CD14-positive monocyte (primary cell): ENCODE measurements at regions of chr17 and their contacts with region 1.

Region 1: DNA sequence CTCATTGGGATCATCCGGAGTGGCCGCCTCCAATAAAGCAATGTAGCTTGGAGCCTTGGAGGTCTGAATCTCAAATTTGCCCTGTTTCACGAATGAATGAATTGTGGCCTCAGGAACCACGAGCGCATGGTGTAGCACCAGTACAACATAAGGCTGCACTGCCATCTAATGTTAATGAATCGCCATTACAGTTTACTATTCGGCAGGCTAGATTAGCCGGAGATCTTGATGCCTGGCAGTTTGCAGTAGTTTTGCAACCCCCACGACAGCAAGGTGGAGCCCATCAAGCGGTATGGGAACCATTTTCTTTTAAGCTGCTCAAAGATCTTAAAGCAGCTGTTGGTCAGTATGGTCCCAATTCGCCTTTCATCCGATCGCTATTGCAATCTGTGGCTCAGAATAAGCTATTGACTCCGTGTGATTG is 18.8 kb downstream of the ALOX15B start:
- DNase-seq: peak; percentile 60 to 88 (median 76)
- H3K4me3 ChIP-seq: no peak overlapping the region
- H3K4me3 Mint-ChIP-seq: no peak overlapping the region
- H3K27ac ChIP-seq: no peak overlapping the region
- H3K27ac Mint-ChIP-seq: peak overlapping the region in 2 of 7 donors; percentile 49 to 95
- H3K4me1 ChIP-seq: peaks cover 39 to 42% of the 10 kb centered on the region in 2 donors
- H3K4me1 Mint-ChIP-seq: peaks cover 37% of the 10 kb centered on the region
- H3K27me3 ChIP-seq: peaks cover 4 to 6% of the 10 kb centered on the region in 2 donors
- H3K27me3 Mint-ChIP-seq: peaks cover 12 to 21% (median 14%) of the 10 kb centered on the region in 3 donors
- CTCF ChIP-seq: peak; percentile 81

Region 2: DNA sequence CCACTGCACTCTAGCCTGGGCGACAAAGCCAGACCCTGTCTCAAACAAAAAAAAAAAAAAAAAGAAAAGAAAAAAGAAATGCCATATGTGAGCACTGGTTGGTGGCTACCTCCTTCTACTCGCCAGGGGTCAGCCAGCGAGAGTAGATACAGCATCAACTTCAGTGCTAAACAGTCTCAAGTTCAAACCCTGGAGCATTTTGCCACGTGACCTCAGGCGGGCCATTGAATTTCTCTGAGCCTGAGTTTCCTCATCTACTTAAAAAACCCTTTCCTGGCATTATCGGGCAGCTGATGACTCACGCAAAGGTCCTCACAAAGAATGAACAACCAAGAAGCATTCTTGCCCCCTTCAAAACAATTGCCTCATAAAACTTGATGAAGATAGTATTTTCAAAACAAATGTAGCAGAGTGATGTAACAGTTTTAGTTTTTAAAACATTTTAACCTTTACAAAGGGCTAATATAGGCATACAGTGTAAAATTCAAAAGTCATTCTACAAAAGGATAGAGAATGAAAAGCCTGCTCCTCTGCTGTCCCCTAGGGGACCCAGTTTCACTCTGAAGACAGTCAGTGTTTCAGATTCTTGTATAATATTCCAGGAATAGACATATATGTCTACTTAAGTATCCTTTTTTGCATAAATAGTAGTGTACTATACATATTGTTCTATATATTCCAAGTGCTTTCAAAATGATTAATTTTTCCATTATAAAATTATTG is 311.8 kb before region 1 on chr17:
- intact Hi-C with region 1: loop called in 1 of 2 experiments (anchors 10 kb)
- DNase-seq: peak; percentile 30 to 72 (median 46)
- H3K4me3 ChIP-seq: no peak overlapping the region
- H3K4me3 Mint-ChIP-seq: no peak overlapping the region
- H3K27ac ChIP-seq: no peak overlapping the region
- H3K27ac Mint-ChIP-seq: peak overlapping the region in 1 of 7 donors; percentile 42
- H3K4me1 ChIP-seq: peaks cover 0 to 8% of the 10 kb centered on the region in 2 donors
- H3K4me1 Mint-ChIP-seq: peaks cover 11% of the 10 kb centered on the region
- H3K27me3 ChIP-seq: no peaks in the 10 kb centered on the region
- H3K27me3 Mint-ChIP-seq: peaks cover 2 to 4% (median 2%) of the 10 kb centered on the region in 3 donors
- CTCF ChIP-seq: no peak

Region 3: DNA sequence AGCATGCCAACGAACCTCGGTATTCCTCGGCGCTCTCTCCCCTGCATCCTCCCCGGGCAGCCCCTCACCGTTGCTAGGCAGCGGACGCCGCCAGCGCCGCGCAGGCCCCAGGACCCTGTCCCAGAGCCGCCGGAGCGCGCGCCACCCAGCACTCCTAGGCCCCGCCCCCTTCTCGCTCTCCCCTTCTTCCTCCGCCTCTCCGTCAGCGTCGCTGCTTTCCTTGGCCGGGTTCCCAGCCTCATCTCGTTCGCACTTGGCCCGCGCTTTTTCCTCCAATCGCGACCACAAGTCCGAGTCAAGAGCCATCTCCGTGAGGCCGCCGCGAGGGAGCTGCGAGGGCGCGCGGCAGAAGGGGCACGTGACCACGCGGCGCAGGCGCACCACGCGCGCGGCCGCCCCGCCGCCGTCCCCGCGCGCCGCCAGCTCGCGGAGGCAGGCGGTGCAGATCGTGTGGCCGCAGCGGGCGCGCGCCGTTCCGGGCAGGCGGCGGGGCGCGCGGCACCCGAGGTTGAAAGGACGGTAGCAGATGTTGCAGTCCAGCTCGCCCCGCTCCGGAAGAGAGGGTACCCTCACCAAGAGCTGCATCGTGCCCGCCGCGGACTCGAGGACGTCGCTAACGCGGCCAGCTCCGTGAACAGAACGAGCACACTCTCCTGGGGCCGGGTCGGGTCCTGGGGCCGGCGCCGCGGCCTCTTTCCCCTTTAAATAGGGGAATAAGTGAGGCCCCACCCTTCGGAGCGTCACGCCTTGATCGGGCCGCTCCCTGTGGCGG is 141.9 kb before region 1 on chr17 and contains the start of gene RNF227:
- intact Hi-C with region 1: loop called (anchors 2 kb)
- DNase-seq: peak; percentile 71 to 88 (median 79)
- H3K4me3 ChIP-seq: peak within 1 kb of the TSS; percentile 27 to 66 (median 34)
- H3K4me3 Mint-ChIP-seq: peak within 1 kb of the TSS; percentile 86 to 89
- H3K27ac ChIP-seq: peak within 1 kb of the TSS; percentile 81 to 87
- H3K27ac Mint-ChIP-seq: peak within 1 kb of the TSS; percentile 83 to 96 (median 94)
- H3K4me1 ChIP-seq: peaks cover 23 to 32% of the 10 kb centered on the region in 2 donors
- H3K4me1 Mint-ChIP-seq: peaks cover 39% of the 10 kb centered on the region
- H3K27me3 ChIP-seq: no peaks in the 10 kb centered on the region
- H3K27me3 Mint-ChIP-seq: peaks cover 0 to 3% (median 1%) of the 10 kb centered on the region in 3 donors
- CTCF ChIP-seq: no peak
- polyA plus RNA-seq, gene RNF227: 0.59 to 6.7 (median 1.3) TPM

Region 4: GRCh38 chr17:8016632-8017478 is 40.8 kb before region 1 on chr17:
- intact Hi-C with region 1: loop called (anchors 2 kb)
- DNase-seq: peak; percentile 70 to 85 (median 77)
- H3K4me3 ChIP-seq: peak overlapping the region; percentile 36 to 75 (median 39)
- H3K4me3 Mint-ChIP-seq: peak overlapping the region; percentile 81 to 89
- H3K27ac ChIP-seq: peak overlapping the region; percentile 79 to 84
- H3K27ac Mint-ChIP-seq: peak overlapping the region; percentile 89 to 97 (median 93)
- H3K4me1 ChIP-seq: peaks cover 68 to 78% of the 10 kb centered on the region in 2 donors
- H3K4me1 Mint-ChIP-seq: peaks cover 73% of the 10 kb centered on the region
- H3K27me3 ChIP-seq: peaks cover 0 to 6% of the 10 kb centered on the region in 2 donors
- H3K27me3 Mint-ChIP-seq: peaks cover 0 to 9% (median 9%) of the 10 kb centered on the region in 3 donors
- CTCF ChIP-seq: peak; percentile 95

Region 5: DNA sequence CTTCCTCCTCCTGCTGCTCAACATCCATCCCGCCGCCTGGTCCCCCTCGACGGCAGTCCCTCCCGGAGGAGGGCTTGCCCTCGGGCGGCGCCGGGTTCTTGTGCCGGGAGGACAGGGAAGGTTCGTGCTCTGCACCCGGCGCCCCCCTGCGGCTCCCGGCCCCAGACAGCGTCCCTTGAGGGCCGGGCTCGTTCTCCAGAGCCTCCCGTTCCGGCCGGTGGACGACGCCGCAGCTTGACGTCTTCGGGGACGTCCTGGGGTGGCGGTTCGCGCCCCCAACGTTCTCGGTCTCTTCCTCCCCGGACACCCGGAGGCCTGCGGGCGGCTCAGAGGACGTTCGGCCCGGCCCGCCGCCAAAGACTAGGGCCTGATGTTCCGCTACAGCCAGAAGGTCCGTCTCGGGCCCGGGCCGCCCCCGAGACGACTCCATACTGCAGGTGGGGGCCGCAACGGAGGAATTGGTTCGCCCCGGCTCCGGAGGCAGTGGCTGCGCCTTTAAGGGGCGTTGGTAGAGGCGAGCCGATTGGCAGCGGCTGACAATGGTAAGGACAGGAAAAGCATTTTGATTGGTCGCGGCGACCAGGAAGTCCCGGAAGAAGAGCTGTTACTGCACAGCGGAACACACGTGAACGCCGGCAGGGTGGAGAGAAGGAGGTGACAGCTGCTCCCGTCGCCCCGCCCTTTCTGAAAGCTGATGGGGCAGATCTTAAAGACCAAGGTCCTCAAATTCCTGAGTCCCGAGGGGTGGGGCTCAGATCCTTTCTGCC is 132.2 kb after region 1 on chr17 and contains the start of gene BORCS6:
- intact Hi-C with region 1: no loop called
- DNase-seq: peak; percentile 96 to 98 (median 98)
- H3K4me3 ChIP-seq: peak within 1 kb of the TSS; percentile 82 to 90 (median 87)
- H3K4me3 Mint-ChIP-seq: no peak within 1 kb of the TSS
- H3K27ac ChIP-seq: peak within 1 kb of the TSS; percentile 78 to 89
- H3K27ac Mint-ChIP-seq: peak within 1 kb of the TSS in 6 of 7 donors; percentile 88 to 94 (median 92)
- H3K4me1 ChIP-seq: peaks cover 65 to 73% of the 10 kb centered on the region in 2 donors
- H3K4me1 Mint-ChIP-seq: peaks cover 9% of the 10 kb centered on the region
- H3K27me3 ChIP-seq: no peaks in the 10 kb centered on the region
- H3K27me3 Mint-ChIP-seq: peaks cover 0 to 5% (median under 1%) of the 10 kb centered on the region in 3 donors
- CTCF ChIP-seq: no peak
- polyA plus RNA-seq, gene BORCS6: 5.4 to 14.1 (median 13.9) TPM

Region 6: GRCh38 chr17:8300627-8301242 is 243.0 kb after region 1 on chr17:
- intact Hi-C with region 1: loop called in 1 of 2 experiments (anchors 2 kb)
- DNase-seq: peak; percentile 59 to 75 (median 69)
- H3K4me3 ChIP-seq: no peak overlapping the region
- H3K4me3 Mint-ChIP-seq: no peak overlapping the region
- H3K27ac ChIP-seq: no peak overlapping the region
- H3K27ac Mint-ChIP-seq: no peak overlapping the region
- H3K4me1 ChIP-seq: peaks cover 12% of the 10 kb centered on the region in 2 donors
- H3K4me1 Mint-ChIP-seq: peaks cover 17% of the 10 kb centered on the region
- H3K27me3 ChIP-seq: no peaks in the 10 kb centered on the region
- H3K27me3 Mint-ChIP-seq: peaks cover 0 to 3% (median 0%) of the 10 kb centered on the region in 3 donors
- CTCF ChIP-seq: peak; percentile 88